ENCODE measurements at regions of chr4 and their contacts with region 1.

Region 1: GRCh38 chr4:100093091-100093866 is 97.0 kb downstream of the DDIT4L start:
- DNase-seq: peak; percentile 93
- ATAC-seq: peak; percentile 99
- H3K4me3 ChIP-seq: no peak overlapping the region
- H3K4me3 Mint-ChIP-seq: peak overlapping the region; percentile 48
- H3K27ac ChIP-seq: no peak overlapping the region
- H3K27ac Mint-ChIP-seq: peak overlapping the region; percentile 57
- H3K4me1 ChIP-seq: peaks cover 7 to 12% of the 10 kb centered on the region in 2 donors
- H3K4me1 Mint-ChIP-seq: peaks cover 26% of the 10 kb centered on the region
- H3K27me3 ChIP-seq: no peaks in the 10 kb centered on the region
- H3K27me3 Mint-ChIP-seq: peaks cover 5% of the 10 kb centered on the region
- CTCF ChIP-seq: peak; percentile 84

Region 2: GRCh38 chr4:98612318-98613250 is 1480.7 kb before region 1 on chr4:
- CTCF ChIA-PET with region 1: no interaction called
- POLR2A ChIA-PET with region 1: no interaction called
- intact Hi-C with region 1: no loop called
- DNase-seq: peak; percentile 12
- ATAC-seq: peak; percentile 17
- H3K4me3 ChIP-seq: no peak overlapping the region
- H3K4me3 Mint-ChIP-seq: peak overlapping the region; percentile 52
- H3K27ac ChIP-seq: no peak overlapping the region
- H3K27ac Mint-ChIP-seq: no peak overlapping the region
- H3K4me1 ChIP-seq: peaks cover 0 to 8% of the 10 kb centered on the region in 2 donors
- H3K4me1 Mint-ChIP-seq: peaks cover 20% of the 10 kb centered on the region
- H3K27me3 ChIP-seq: no peaks in the 10 kb centered on the region
- H3K27me3 Mint-ChIP-seq: no peaks in the 10 kb centered on the region
- CTCF ChIP-seq: no peak

Region 3: DNA sequence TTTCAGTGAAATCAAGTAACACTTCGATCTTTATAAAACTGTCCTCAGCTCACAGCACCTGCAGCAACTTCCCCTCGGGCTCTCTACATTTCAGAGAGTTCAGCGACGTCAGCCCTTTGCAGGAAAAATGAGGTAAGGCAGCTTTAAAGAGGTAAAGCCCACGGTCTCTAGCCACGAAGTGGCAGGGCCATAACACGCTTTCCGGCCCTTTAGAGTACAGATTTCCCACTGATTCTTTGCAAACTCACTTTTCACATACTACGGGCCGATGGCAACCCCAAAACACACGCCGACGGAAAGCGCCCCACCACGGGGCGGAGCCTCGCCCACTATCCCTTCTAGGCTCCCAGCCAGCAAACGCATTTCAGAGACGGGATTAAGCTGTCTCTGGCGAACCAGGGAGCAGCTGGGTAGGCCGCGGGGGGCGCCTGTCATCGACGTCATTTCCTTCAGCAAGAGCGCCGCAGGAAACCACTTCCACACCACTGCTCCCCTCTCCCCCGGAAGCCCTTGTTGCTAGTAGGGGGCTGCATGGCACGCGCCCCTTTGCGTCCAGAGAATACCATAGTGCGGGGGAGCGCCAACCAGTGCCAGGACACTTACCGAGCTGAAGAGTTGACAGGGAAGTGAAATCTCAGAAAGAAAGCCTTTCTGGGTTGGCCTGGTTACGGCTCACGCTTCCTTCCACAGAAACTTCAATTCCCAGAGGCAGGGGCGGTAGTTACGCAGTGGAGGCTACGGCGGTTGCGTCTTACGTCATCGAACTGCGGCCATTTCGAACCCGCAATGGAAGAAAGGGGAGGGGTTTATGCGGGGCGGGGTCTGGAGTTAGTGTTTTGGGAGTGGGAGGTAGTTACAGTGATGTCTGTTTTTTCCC is 529.7 kb before region 1 on chr4 and contains the start of gene TRMT10A:
- CTCF ChIA-PET with region 1: no interaction called
- POLR2A ChIA-PET with region 1: no interaction called
- intact Hi-C with region 1: loop called (anchors 5 kb)
- DNase-seq: peak; percentile 98
- ATAC-seq: peak; percentile 84
- H3K4me3 ChIP-seq: peak within 1 kb of the TSS; percentile 73 to 92 (median 80)
- H3K4me3 Mint-ChIP-seq: peak within 1 kb of the TSS; percentile 99
- H3K27ac ChIP-seq: peak within 1 kb of the TSS; percentile 96
- H3K27ac Mint-ChIP-seq: peak within 1 kb of the TSS; percentile 100
- H3K4me1 ChIP-seq: peaks cover 4 to 9% of the 10 kb centered on the region in 2 donors
- H3K4me1 Mint-ChIP-seq: peaks cover 18% of the 10 kb centered on the region
- H3K27me3 ChIP-seq: peaks cover 0 to 9% (median 2%) of the 10 kb centered on the region in 4 experiments
- H3K27me3 Mint-ChIP-seq: peaks cover 24% of the 10 kb centered on the region
- CTCF ChIP-seq: no peak
- total RNA-seq, gene TRMT10A: 4.5 and 5.5 TPM in 2 replicates

Region 4: DNA sequence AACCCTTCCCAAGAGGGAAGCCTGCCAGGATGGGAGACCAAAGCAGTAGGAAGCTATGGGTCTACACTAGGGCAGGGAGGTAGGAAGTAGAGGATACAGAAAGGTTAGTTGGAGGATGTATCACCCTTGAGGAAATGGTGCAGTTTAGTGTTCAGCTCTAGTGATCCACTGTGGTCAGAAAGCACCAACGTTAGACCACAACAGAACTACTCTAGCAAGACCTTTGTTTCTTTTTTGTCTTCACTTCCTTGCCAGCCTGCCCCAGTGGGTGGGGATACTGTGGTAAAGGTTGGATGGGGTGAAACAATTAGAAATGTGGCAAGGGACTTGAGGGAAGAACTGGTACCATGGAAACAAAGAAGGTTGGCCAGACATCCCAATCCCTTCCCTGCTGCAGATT is 13.7 kb after region 1 on chr4:
- CTCF ChIA-PET with region 1: interaction called, 95 read pairs
- POLR2A ChIA-PET with region 1: interaction called, 5 read pairs
- intact Hi-C with region 1: loop called (anchors 1 kb)
- DNase-seq: peak; percentile 84
- ATAC-seq: peak; percentile 96
- H3K4me3 ChIP-seq: peak overlapping the region in 2 of 5 experiments; percentile 2 to 19
- H3K4me3 Mint-ChIP-seq: peak overlapping the region; percentile 51
- H3K27ac ChIP-seq: no peak overlapping the region
- H3K27ac Mint-ChIP-seq: peak overlapping the region; percentile 51
- H3K4me1 ChIP-seq: peaks cover 18 to 31% of the 10 kb centered on the region in 2 donors
- H3K4me1 Mint-ChIP-seq: peaks cover 40% of the 10 kb centered on the region
- H3K27me3 ChIP-seq: no peaks in the 10 kb centered on the region
- H3K27me3 Mint-ChIP-seq: no peaks in the 10 kb centered on the region
- CTCF ChIP-seq: no peak

Region 5: DNA sequence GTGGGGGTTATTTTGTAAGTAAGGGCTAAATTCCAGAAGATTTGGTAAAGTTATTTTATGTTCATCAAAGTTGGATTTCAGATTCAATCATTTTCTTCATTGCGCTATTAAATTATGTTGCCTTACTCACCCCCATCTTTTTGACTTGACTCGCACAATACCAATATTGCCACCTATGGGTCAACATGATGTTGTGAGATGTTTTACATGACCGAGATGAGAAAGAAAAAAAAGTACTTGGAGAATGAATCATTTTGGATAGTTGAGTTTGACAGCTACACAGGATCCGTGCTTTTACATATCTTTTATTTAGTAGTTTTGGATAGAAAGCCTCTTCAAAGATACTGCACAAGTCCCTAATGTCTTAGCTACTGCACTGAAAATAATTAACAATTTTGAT is 648.8 kb after region 1 on chr4:
- CTCF ChIA-PET with region 1: no interaction called
- POLR2A ChIA-PET with region 1: no interaction called
- intact Hi-C with region 1: loop called (anchors 2 kb)
- DNase-seq: no peak
- ATAC-seq: no peak
- H3K4me3 ChIP-seq: no peak overlapping the region
- H3K4me3 Mint-ChIP-seq: no peak overlapping the region
- H3K27ac ChIP-seq: no peak overlapping the region
- H3K27ac Mint-ChIP-seq: no peak overlapping the region
- H3K4me1 ChIP-seq: no peaks in the 10 kb centered on the region
- H3K4me1 Mint-ChIP-seq: no peaks in the 10 kb centered on the region
- H3K27me3 ChIP-seq: no peaks in the 10 kb centered on the region
- H3K27me3 Mint-ChIP-seq: peaks cover 4% of the 10 kb centered on the region
- CTCF ChIP-seq: peak; percentile 24

Region 6: DNA sequence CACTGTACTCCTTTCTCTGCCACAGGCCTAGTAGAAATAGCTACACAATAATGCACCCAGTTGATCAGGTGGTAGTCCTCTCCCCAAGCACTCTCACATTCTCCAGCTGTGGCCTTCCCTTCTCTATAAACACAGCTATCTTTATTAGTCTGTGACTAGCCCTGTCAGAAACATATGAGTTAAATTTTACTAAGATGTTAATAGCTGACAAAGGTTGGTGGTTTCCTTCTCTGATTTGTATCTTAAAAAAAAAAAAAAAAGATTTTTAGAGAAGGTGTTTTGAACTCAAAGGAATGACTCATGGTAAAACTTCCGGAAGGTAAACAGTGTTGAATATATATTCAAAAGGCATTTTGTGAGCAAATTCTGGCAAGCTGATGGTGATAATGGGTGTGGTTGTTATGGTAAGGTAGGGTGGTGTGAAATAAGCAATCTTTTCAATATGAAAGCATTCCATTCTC is 926.7 kb after region 1 on chr4:
- CTCF ChIA-PET with region 1: interaction called, 3 read pairs
- POLR2A ChIA-PET with region 1: no interaction called
- intact Hi-C with region 1: loop called (anchors 10 kb)
- DNase-seq: no peak
- ATAC-seq: no peak
- H3K4me3 ChIP-seq: no peak overlapping the region
- H3K4me3 Mint-ChIP-seq: peak overlapping the region; percentile 40
- H3K27ac ChIP-seq: peak overlapping the region in 1 of 2 donors; percentile 22
- H3K27ac Mint-ChIP-seq: peak overlapping the region; percentile 85
- H3K4me1 ChIP-seq: peaks cover 25% of the 10 kb centered on the region in 2 donors
- H3K4me1 Mint-ChIP-seq: peaks cover 36% of the 10 kb centered on the region
- H3K27me3 ChIP-seq: no peaks in the 10 kb centered on the region
- H3K27me3 Mint-ChIP-seq: peaks cover 6% of the 10 kb centered on the region
- CTCF ChIP-seq: no peak

Region 7: DNA sequence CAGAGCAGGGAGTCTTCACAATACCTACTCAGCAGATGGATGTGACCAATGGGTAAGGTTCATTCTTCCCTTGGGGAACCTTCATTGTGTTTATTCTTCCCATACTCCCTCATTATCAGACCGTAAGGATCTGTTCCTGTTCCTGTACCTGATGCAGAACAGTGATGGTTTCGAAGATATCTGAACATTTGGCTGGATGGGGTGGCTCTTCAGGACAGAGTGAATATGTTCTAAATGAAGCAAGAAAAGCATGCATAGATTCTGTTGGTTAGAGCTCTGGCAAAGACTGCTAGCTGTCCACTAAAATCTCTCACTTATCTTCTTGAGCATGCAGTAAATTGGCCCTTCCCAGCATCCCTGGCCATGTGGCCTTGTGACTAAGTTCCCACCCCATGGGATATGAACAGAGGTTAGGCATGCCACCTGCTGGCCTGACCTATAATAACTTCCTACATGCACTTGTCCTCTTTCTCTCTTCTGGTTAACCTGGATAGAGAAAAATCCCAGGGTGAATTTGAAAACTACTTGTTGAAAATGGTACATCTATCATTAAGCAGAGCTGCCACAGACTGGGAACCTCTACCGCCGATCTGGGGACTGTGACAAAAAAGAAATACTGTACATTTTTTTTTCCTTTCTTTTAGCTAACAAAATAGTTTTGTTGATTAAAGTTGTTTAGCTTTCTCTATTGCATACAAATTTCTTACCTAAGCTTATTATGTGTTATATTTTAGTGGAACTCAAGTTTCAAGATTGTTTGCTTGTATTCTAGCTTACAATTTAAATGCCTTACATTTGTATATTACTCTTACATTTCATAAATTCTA is 1637.2 kb after region 1 on chr4:
- CTCF ChIA-PET with region 1: interaction called, 37 read pairs
- POLR2A ChIA-PET with region 1: no interaction called
- intact Hi-C with region 1: loop called (anchors 2 kb)
- DNase-seq: peak; percentile 73
- ATAC-seq: peak; percentile 90
- H3K4me3 ChIP-seq: no peak overlapping the region
- H3K4me3 Mint-ChIP-seq: no peak overlapping the region
- H3K27ac ChIP-seq: no peak overlapping the region
- H3K27ac Mint-ChIP-seq: peak overlapping the region; percentile 13
- H3K4me1 ChIP-seq: peaks cover 6 to 9% of the 10 kb centered on the region in 2 donors
- H3K4me1 Mint-ChIP-seq: peaks cover 14% of the 10 kb centered on the region
- H3K27me3 ChIP-seq: no peaks in the 10 kb centered on the region
- H3K27me3 Mint-ChIP-seq: no peaks in the 10 kb centered on the region
- CTCF ChIP-seq: peak; percentile 80